ENCODE measurements at regions of chr4 and their contacts with region 1.

Region 1: GRCh38 chr4:18480928-18481327 is 459.4 kb upstream of the LCORL start:
- DNase-seq: no peak
- ATAC-seq: no peak
- H3K4me3 ChIP-seq: no peak overlapping the region
- H3K4me3 Mint-ChIP-seq: no peak overlapping the region
- H3K27ac ChIP-seq: no peak overlapping the region
- H3K27ac Mint-ChIP-seq: no peak overlapping the region
- H3K4me1 ChIP-seq: no peaks in the 10 kb centered on the region
- H3K4me1 Mint-ChIP-seq: no peaks in the 10 kb centered on the region
- H3K27me3 ChIP-seq: no peaks in the 10 kb centered on the region
- H3K27me3 Mint-ChIP-seq: no peaks in the 10 kb centered on the region
- CTCF ChIP-seq: no peak

Region 2: DNA sequence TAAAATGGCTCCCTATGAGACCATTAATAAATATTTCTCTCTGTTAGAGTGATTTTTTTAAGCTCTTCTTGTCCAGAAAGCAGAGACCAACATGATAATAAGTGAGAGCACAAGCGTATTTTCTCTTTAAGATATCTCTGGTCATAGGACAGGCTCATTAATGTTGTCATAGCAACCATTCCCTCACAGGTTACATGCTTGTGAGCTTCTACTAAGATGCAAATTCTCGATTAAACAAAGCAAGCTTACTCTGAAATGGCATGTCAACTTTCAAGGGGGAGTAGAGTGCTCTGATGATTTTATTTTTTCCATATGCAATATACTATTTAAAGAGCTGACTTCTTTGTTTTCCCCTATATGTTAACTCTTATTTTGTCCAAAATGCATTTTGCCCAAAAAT is 27.9 kb after region 1 on chr4:
- CTCF ChIA-PET with region 1: no interaction called
- POLR2A ChIA-PET with region 1: no interaction called
- intact Hi-C with region 1: loop called in 1 of 2 experiments (anchors 1 kb)
- DNase-seq: no peak
- ATAC-seq: no peak
- H3K4me3 ChIP-seq: no peak overlapping the region
- H3K4me3 Mint-ChIP-seq: no peak overlapping the region
- H3K27ac ChIP-seq: no peak overlapping the region
- H3K27ac Mint-ChIP-seq: no peak overlapping the region
- H3K4me1 ChIP-seq: no peaks in the 10 kb centered on the region
- H3K4me1 Mint-ChIP-seq: no peaks in the 10 kb centered on the region
- H3K27me3 ChIP-seq: no peaks in the 10 kb centered on the region
- H3K27me3 Mint-ChIP-seq: no peaks in the 10 kb centered on the region
- CTCF ChIP-seq: no peak

Region 3: GRCh38 chr4:18593445-18594002 is 112.6 kb after region 1 on chr4:
- CTCF ChIA-PET with region 1: no interaction called
- POLR2A ChIA-PET with region 1: no interaction called
- intact Hi-C with region 1: no loop called
- DNase-seq: peak; percentile 4 to 74 (median 39)
- ATAC-seq: peak; percentile 69
- H3K4me3 ChIP-seq: no peak overlapping the region
- H3K4me3 Mint-ChIP-seq: no peak overlapping the region
- H3K27ac ChIP-seq: no peak overlapping the region
- H3K27ac Mint-ChIP-seq: no peak overlapping the region
- H3K4me1 ChIP-seq: no peaks in the 10 kb centered on the region
- H3K4me1 Mint-ChIP-seq: peaks cover 4% of the 10 kb centered on the region
- H3K27me3 ChIP-seq: no peaks in the 10 kb centered on the region
- H3K27me3 Mint-ChIP-seq: peaks cover 13% of the 10 kb centered on the region
- CTCF ChIP-seq: peak; percentile 81